T-cell (primary cell): ENCODE measurements at regions of chr3 and their contacts with region 1.

Region 1: GRCh38 chr3:67691207-67691606 is 36.8 kb upstream of the SUCLG2 start:
- DNase-seq: no peak
- ATAC-seq: no peak
- H3K4me3 ChIP-seq: no peak overlapping the region
- H3K4me3 Mint-ChIP-seq: no peak overlapping the region
- H3K27ac ChIP-seq: no peak overlapping the region
- H3K27ac Mint-ChIP-seq: no peak overlapping the region
- H3K4me1 ChIP-seq: peaks cover 0 to under 1% of the 10 kb centered on the region in 2 experiments
- H3K4me1 Mint-ChIP-seq: peaks cover 4 to 14% (median 6%) of the 10 kb centered on the region in 3 donors
- H3K27me3 ChIP-seq: no peaks in the 10 kb centered on the region
- H3K27me3 Mint-ChIP-seq: no peaks in the 10 kb centered on the region

Region 2: DNA sequence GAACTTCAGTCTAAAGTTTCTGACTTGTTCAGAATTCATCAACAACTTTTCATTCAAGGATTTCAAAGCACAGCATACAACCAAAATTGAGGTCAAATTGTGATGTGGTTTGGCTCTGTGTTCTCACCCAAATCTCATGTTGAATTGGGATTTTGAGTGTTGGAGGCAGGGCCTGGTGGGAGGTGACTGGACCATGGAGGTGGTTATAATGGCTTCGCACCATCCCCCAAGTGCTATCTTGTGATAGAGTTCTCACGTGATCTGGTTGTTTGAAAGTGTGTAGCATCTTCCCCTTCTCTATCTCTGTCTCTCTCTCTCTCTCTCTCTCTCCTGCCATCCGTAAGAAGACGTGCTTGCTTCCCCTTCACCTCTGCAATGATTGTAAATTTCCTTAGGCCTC is 17.2 kb before region 1 on chr3:
- CTCF ChIA-PET with region 1: interaction called in 1 of 2 experiments, 3 read pairs
- POLR2A ChIA-PET with region 1: interaction called, 3 to 11 read pairs
- DNase-seq: peak in 8 of 35 experiments; percentile 2 to 30 (median 11)
- ATAC-seq: no peak
- H3K4me3 ChIP-seq: no peak overlapping the region
- H3K4me3 Mint-ChIP-seq: no peak overlapping the region
- H3K27ac ChIP-seq: no peak overlapping the region
- H3K27ac Mint-ChIP-seq: peak overlapping the region in 1 of 2 donors; percentile 17
- H3K4me1 ChIP-seq: peaks cover 16 to 22% of the 10 kb centered on the region in 2 experiments
- H3K4me1 Mint-ChIP-seq: peaks cover 26 to 49% (median 28%) of the 10 kb centered on the region in 3 donors
- H3K27me3 ChIP-seq: no peaks in the 10 kb centered on the region
- H3K27me3 Mint-ChIP-seq: no peaks in the 10 kb centered on the region